Psoas muscle (tissue), 8 donors: ENCODE measurements at regions of chr17 and their contacts with region 1.

Region 1: GRCh38 chr17:6473128-6473767 is 29.0 kb downstream of the PIMREG start:
- DNase-seq: peak; percentile 70 to 83
- ATAC-seq: peak; percentile 65 to 87 (median 80)
- H3K4me3 ChIP-seq: no peak overlapping the region
- H3K27ac ChIP-seq: no peak overlapping the region
- H3K4me1 ChIP-seq: no peaks in the 10 kb centered on the region
- H3K27me3 ChIP-seq: no peaks in the 10 kb centered on the region
- CTCF ChIP-seq: peak; percentile 91

Region 2: GRCh38 chr17:6346156-6346786 is 127.0 kb before region 1 on chr17:
- intact Hi-C with region 1: no loop called
- DNase-seq: no peak
- ATAC-seq: no peak
- H3K4me3 ChIP-seq: no peak overlapping the region
- H3K27ac ChIP-seq: no peak overlapping the region
- H3K4me1 ChIP-seq: no peaks in the 10 kb centered on the region
- H3K27me3 ChIP-seq: peaks cover 0 to 32% (median 4%) of the 10 kb centered on the region in 3 donors
- CTCF ChIP-seq: no peak

Region 3: DNA sequence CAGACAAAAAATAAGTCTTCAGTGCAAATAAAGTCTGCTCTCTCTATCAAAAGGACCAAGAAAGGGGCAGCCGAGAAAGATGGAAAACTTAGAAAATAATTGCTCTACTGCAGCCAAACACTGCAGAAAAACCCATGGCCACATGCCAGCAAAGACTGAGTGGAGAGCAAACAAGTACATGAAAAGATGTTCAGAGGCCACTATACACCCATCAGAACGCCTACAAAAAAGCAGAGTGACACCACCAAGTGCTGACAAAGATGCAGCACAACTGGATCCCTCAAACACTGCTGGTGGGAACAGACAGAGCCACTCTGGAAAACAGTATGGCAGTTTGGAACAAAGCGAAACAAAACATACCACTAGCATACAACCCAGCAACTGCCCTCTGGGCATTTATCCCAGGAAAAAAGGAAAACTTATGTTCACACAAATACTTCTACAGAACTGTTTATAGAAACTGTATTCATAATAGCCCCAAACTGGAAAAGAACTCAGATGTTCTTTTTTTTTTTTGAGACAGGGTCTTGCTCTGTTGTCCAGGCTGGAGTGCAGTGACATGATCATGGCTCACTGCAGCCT is 130.6 kb after region 1 on chr17:
- intact Hi-C with region 1: loop called in 1 of 2 experiments (anchors 5 kb)
- DNase-seq: no peak
- ATAC-seq: no peak
- H3K4me3 ChIP-seq: no peak overlapping the region
- H3K27ac ChIP-seq: no peak overlapping the region
- H3K4me1 ChIP-seq: peaks cover under 1% of the 10 kb centered on the region
- H3K27me3 ChIP-seq: no peaks in the 10 kb centered on the region
- CTCF ChIP-seq: no peak

Region 4: GRCh38 chr17:6640536-6641373 is 167.5 kb after region 1 on chr17 and contains the starts of genes KIAA0753 and TXNDC17:
- intact Hi-C with region 1: loop called (anchors 10 kb)
- DNase-seq: peak; percentile 93 to 96
- ATAC-seq: peak; percentile 96 to 98 (median 97)
- H3K4me3 ChIP-seq: peak within 1 kb of the TSS; percentile 80
- H3K27ac ChIP-seq: peak within 1 kb of the TSS; percentile 82
- H3K4me1 ChIP-seq: peaks cover 13% of the 10 kb centered on the region
- H3K27me3 ChIP-seq: no peaks in the 10 kb centered on the region
- CTCF ChIP-seq: no peak
- total RNA-seq, gene KIAA0753: 2.7 to 4.3 (median 3.0) TPM
- total RNA-seq, gene TXNDC17: 27.5 to 41.1 (median 30.9) TPM